ENCODE measurements at regions of chr5 and their contacts with region 1.

Region 1: GRCh38 chr5:159230657-159231056 is 21.3 kb upstream of the RNF145 start:
- DNase-seq: peak; percentile 89
- H3K4me3 Mint-ChIP-seq: peak overlapping the region; percentile 22
- H3K27ac Mint-ChIP-seq: peak overlapping the region; percentile 5
- H3K4me1 Mint-ChIP-seq: peaks cover 44% of the 10 kb centered on the region
- H3K27me3 Mint-ChIP-seq: no peaks in the 10 kb centered on the region
- CTCF ChIP-seq: no peak

Region 2: GRCh38 chr5:159163027-159163700 is 67.5 kb before region 1 on chr5:
- CTCF ChIA-PET with region 1: no interaction called
- POLR2A ChIA-PET with region 1: interaction called, 15 read pairs
- intact Hi-C with region 1: no loop called
- DNase-seq: peak; percentile 78
- H3K4me3 Mint-ChIP-seq: peak overlapping the region; percentile 3
- H3K27ac Mint-ChIP-seq: peak overlapping the region; percentile 69
- H3K4me1 Mint-ChIP-seq: peaks cover 27% of the 10 kb centered on the region
- H3K27me3 Mint-ChIP-seq: no peaks in the 10 kb centered on the region
- CTCF ChIP-seq: no peak

Region 3: GRCh38 chr5:159178978-159179377 is 51.7 kb before region 1 on chr5:
- CTCF ChIA-PET with region 1: interaction called, 3 read pairs
- POLR2A ChIA-PET with region 1: interaction called, 50 read pairs
- intact Hi-C with region 1: no loop called
- DNase-seq: peak; percentile 95
- H3K4me3 Mint-ChIP-seq: peak overlapping the region; percentile 54
- H3K27ac Mint-ChIP-seq: peak overlapping the region; percentile 96
- H3K4me1 Mint-ChIP-seq: peaks cover 77% of the 10 kb centered on the region
- H3K27me3 Mint-ChIP-seq: no peaks in the 10 kb centered on the region
- CTCF ChIP-seq: no peak

Region 4: GRCh38 chr5:159184858-159185381 is 45.7 kb before region 1 on chr5:
- CTCF ChIA-PET with region 1: interaction called, 3 read pairs
- POLR2A ChIA-PET with region 1: interaction called, 50 read pairs
- intact Hi-C with region 1: no loop called
- DNase-seq: peak; percentile 77
- H3K4me3 Mint-ChIP-seq: peak overlapping the region; percentile 48
- H3K27ac Mint-ChIP-seq: peak overlapping the region; percentile 96
- H3K4me1 Mint-ChIP-seq: peaks cover 81% of the 10 kb centered on the region
- H3K27me3 Mint-ChIP-seq: no peaks in the 10 kb centered on the region
- CTCF ChIP-seq: no peak

Region 5: DNA sequence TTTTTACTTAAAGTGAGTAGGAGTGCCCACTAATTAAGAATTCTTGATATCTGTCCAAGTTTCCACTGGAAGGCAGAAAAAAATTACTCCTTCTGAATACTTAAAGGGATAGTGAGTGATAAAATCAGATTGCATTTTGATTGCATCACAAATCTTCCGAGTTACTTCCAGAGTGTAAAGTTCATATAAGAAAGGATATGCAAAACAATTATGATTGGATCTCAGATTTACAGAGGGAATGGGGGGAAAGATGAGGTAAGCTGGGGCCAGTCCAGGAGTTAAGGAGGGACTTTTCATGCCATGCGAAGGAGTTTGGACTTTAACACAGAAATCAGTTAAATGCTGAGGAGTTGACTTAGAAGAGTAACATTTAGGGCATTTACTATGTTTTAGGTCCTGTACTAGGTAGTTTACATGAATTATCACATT is 12.0 kb before region 1 on chr5:
- CTCF ChIA-PET with region 1: interaction called, 18 read pairs
- POLR2A ChIA-PET with region 1: interaction called, 234 read pairs
- intact Hi-C with region 1: no loop called
- DNase-seq: peak; percentile 36
- H3K4me3 Mint-ChIP-seq: no peak overlapping the region
- H3K27ac Mint-ChIP-seq: peak overlapping the region; percentile 35
- H3K4me1 Mint-ChIP-seq: peaks cover 59% of the 10 kb centered on the region
- H3K27me3 Mint-ChIP-seq: no peaks in the 10 kb centered on the region
- CTCF ChIP-seq: no peak

Region 6: GRCh38 chr5:159257007-159257406 is 26.4 kb after region 1 on chr5:
- CTCF ChIA-PET with region 1: interaction called, 6 read pairs
- POLR2A ChIA-PET with region 1: interaction called, 35 read pairs
- intact Hi-C with region 1: loop called (anchors 5 kb)
- DNase-seq: no peak
- H3K4me3 Mint-ChIP-seq: no peak overlapping the region
- H3K27ac Mint-ChIP-seq: no peak overlapping the region
- H3K4me1 Mint-ChIP-seq: peaks cover 13% of the 10 kb centered on the region
- H3K27me3 Mint-ChIP-seq: no peaks in the 10 kb centered on the region
- CTCF ChIP-seq: no peak

Region 7: DNA sequence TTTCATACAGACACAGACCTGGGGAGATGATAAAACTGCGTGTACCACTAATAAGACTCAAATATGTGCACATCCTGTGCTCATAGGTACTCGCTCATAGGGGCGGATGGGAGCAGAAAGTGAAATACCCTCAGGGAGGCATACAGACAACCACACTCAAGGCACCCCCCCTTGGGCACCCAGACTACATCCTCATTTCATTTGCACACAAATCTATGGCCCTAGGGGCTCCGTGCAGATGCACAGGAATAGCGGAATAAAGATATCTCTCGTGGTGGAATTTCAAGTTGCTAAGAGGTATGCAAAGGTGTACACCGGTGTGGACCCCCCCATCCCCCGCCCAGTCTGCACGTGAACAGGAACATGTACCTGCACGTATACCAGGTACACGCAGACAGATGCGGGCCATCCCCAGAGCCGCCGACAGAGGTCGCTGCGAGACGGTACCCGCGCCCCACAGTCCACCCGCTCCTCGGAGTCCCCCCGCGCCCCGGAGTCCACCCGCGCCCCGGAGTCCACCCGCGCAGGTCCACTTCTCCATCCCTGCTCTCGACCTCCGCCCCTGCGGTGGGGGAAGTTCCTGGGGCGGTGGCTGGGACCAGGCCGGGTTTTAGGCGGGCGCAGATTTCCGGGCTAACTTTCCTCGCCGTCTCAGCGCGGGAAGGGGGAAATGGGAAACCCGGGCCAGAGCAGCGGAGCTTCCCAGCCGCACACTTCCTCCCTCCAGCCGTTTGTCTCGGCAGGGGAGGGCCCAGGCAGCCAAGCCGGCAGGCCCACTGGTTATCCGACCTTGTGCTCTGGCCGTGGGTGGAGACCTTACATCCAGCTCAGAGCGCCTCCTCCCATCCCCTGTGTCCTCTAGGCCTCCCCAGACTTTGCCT is 100.7 kb after region 1 on chr5:
- CTCF ChIA-PET with region 1: no interaction called
- POLR2A ChIA-PET with region 1: no interaction called
- intact Hi-C with region 1: no loop called
- DNase-seq: peak; percentile 49
- H3K4me3 Mint-ChIP-seq: peak overlapping the region; percentile 73
- H3K27ac Mint-ChIP-seq: peak overlapping the region; percentile 80
- H3K4me1 Mint-ChIP-seq: peaks cover 30% of the 10 kb centered on the region
- H3K27me3 Mint-ChIP-seq: no peaks in the 10 kb centered on the region
- CTCF ChIP-seq: peak; percentile 80